ENCODE measurements at regions of chr19 and their contacts with region 1.

Region 1: DNA sequence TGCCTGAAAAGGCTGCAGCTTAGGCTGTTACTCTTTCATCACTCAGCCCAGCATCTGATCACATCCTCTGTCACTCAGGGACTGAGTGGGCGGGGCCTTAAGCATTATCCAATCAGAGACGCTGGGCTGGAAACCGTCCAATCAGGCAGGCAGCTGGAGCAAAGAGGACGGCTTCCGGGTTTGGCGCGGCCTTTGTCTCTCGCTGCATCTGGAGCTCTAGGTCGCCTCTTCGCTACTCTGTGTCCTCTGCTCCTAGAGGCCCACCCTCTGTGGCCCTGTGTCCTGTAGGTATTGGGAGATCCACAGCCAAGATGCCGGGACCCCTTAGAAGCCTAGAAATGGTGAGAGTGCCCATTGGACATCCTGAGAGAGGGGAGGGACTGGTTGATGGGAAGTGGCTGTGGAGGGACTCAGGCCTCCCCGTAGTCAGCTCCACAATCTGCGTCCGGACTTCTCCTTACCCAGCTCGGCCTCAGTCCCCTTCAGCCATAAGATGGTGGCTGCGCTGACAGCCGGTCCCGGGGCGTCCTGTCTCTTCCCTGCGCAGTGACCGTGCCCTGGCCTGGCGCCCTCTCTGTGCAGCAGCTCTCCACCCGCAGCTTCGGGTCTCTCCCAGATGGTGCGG is at the start of gene ZNF486:
- DNase-seq: peak; percentile 97 to 99 (median 97)
- ATAC-seq: peak; percentile 98 to 99
- H3K4me3 ChIP-seq: peak within 1 kb of the TSS; percentile 80
- H3K27ac ChIP-seq: peak within 1 kb of the TSS; percentile 87
- H3K4me1 ChIP-seq: peaks cover 4% of the 10 kb centered on the region
- H3K27me3 ChIP-seq: no peaks in the 10 kb centered on the region
- total RNA-seq, gene ZNF486: 2.6 to 3.4 (median 3.2) TPM

Region 2: GRCh38 chr19:20051841-20052768 is 115.0 kb before region 1 on chr19:
- intact Hi-C with region 1: loop called in 1 of 4 experiments (anchors 10 kb)
- DNase-seq: peak; percentile 97 to 99 (median 98)
- ATAC-seq: peak; percentile 100
- H3K4me3 ChIP-seq: peak overlapping the region; percentile 73
- H3K27ac ChIP-seq: peak overlapping the region; percentile 93
- H3K4me1 ChIP-seq: peaks cover 3% of the 10 kb centered on the region
- H3K27me3 ChIP-seq: no peaks in the 10 kb centered on the region

Region 3: DNA sequence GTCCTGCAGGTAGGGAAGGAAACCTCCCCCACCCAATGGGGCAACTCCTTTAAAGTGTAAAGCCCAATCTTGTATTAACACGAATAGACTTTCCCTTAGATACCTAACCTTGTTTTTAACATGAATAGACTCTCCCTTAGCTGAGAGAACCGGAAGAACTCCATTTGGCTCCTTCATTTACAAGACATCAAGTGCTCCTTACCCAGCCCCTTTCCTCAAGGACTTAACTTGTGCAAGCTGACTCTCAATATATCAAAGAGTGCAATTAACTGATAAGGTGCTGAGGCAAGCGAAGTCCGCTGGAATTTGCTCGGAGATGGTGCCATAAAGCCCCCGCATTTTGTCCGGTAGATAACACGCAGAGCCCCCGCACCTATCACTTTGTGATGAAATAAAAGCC is 99.2 kb before region 1 on chr19:
- intact Hi-C with region 1: no loop called
- DNase-seq: no peak
- ATAC-seq: no peak
- H3K4me3 ChIP-seq: no peak overlapping the region
- H3K27ac ChIP-seq: no peak overlapping the region
- H3K4me1 ChIP-seq: no peaks in the 10 kb centered on the region
- H3K27me3 ChIP-seq: no peaks in the 10 kb centered on the region